ENCODE measurements at regions of chr1 and their contacts with region 1.

Region 1: DNA sequence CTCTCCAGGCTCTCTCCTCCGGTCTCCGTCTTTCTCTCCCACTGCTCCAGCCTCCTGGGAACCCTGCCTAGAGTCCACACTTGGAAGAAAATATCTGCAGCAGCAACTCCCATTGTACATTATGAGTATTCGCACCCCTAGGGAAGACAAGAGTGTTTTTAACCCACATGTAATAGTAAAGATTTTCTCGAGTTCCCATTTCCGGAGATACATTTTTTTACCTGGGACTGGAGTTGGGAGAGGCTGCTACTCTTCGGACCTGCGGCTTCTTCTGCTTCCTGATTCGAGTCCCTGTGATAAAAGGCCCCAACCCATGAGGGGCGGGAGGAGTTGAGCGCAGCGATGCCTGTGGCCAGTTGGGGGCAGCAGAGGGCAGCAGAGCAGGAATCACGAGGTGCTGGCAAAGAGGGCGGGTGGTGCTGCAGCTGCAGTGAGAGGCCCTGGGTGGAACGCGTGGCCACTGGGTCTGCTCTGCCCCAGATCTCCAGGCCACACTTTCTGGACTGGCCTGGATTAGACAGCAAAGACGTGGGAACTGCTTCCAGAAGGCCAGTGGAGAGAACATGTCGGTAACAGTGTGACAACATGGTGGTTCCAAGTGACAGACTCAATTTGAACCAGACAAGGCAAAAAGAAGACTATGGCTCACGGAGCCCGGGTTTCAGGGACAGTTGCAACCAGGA is 221.0 kb upstream of the CSF3R start:
- DNase-seq: peak; percentile 85
- H3K4me3 ChIP-seq: no peak overlapping the region
- H3K27ac ChIP-seq: no peak overlapping the region
- H3K4me1 ChIP-seq: peaks cover 10% of the 10 kb centered on the region
- CTCF ChIP-seq: peak; percentile 96

Region 2: GRCh38 chr1:36609241-36610027 is 94.2 kb before region 1 on chr1:
- CTCF ChIA-PET with region 1: no interaction called
- POLR2A ChIA-PET with region 1: no interaction called
- intact Hi-C with region 1: loop called (anchors 10 kb)
- DNase-seq: peak; percentile 76
- H3K4me3 ChIP-seq: no peak overlapping the region
- H3K27ac ChIP-seq: no peak overlapping the region
- H3K4me1 ChIP-seq: no peaks in the 10 kb centered on the region
- CTCF ChIP-seq: peak; percentile 98

Region 3: GRCh38 chr1:36737767-36738166 is 34.1 kb after region 1 on chr1:
- CTCF ChIA-PET with region 1: no interaction called
- POLR2A ChIA-PET with region 1: no interaction called
- intact Hi-C with region 1: no loop called
- DNase-seq: no peak
- H3K4me3 ChIP-seq: no peak overlapping the region
- H3K27ac ChIP-seq: no peak overlapping the region
- H3K4me1 ChIP-seq: no peaks in the 10 kb centered on the region
- CTCF ChIP-seq: no peak

Region 4: DNA sequence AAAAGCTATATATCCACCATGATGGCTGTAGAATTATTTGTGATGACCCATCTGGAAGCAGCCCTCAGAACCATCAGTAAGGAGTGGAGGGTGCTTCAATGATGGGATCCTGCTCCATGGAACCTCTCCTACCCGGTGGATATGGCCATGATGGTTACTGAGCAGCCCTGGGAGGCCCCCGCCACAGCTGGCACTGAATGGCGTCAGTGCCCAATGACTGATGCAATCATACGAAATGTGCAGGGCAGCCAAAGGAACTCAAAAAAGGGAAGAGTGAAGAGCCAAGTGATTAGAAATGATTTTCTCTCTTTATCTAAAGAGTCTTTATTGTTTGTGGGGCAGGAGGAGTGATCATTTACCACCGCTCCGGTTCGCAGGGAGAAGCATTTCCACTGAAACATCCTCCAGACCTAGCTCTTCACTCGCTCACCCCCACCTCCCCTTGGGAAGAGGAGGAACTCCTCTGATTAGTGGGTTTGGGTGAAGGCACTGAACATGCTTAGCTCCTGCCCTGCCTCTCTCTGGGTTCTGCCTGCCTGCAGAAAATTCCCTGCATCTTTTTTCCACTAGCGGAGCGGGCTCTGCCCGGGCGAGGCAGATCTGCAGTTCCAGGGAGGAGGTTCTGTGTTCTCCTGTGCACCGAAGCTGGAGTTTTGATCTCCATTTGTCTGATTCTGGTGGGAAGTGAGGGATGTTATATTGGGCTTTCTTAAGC is 70.3 kb after region 1 on chr1:
- CTCF ChIA-PET with region 1: no interaction called
- POLR2A ChIA-PET with region 1: no interaction called
- intact Hi-C with region 1: no loop called
- DNase-seq: no peak
- H3K4me3 ChIP-seq: no peak overlapping the region
- H3K27ac ChIP-seq: no peak overlapping the region
- H3K4me1 ChIP-seq: no peaks in the 10 kb centered on the region
- CTCF ChIP-seq: no peak

Region 5: GRCh38 chr1:36885538-36886357 is 182.1 kb after region 1 on chr1:
- CTCF ChIA-PET with region 1: no interaction called
- POLR2A ChIA-PET with region 1: no interaction called
- intact Hi-C with region 1: loop called (anchors 10 kb)
- DNase-seq: no peak
- H3K4me3 ChIP-seq: peak overlapping the region; percentile 37
- H3K27ac ChIP-seq: peak overlapping the region; percentile 92
- H3K4me1 ChIP-seq: peaks cover 75% of the 10 kb centered on the region
- CTCF ChIP-seq: peak; percentile 39; the same call in 1 of the 2 replicates

Region 6: GRCh38 chr1:36950604-36951291 is 247.1 kb after region 1 on chr1:
- CTCF ChIA-PET with region 1: no interaction called
- POLR2A ChIA-PET with region 1: no interaction called
- intact Hi-C with region 1: loop called (anchors 5 kb)
- DNase-seq: peak; percentile 97
- H3K4me3 ChIP-seq: peak overlapping the region; percentile 44
- H3K27ac ChIP-seq: peak overlapping the region; percentile 99
- H3K4me1 ChIP-seq: peaks cover 99% of the 10 kb centered on the region
- CTCF ChIP-seq: no peak

Region 7: DNA sequence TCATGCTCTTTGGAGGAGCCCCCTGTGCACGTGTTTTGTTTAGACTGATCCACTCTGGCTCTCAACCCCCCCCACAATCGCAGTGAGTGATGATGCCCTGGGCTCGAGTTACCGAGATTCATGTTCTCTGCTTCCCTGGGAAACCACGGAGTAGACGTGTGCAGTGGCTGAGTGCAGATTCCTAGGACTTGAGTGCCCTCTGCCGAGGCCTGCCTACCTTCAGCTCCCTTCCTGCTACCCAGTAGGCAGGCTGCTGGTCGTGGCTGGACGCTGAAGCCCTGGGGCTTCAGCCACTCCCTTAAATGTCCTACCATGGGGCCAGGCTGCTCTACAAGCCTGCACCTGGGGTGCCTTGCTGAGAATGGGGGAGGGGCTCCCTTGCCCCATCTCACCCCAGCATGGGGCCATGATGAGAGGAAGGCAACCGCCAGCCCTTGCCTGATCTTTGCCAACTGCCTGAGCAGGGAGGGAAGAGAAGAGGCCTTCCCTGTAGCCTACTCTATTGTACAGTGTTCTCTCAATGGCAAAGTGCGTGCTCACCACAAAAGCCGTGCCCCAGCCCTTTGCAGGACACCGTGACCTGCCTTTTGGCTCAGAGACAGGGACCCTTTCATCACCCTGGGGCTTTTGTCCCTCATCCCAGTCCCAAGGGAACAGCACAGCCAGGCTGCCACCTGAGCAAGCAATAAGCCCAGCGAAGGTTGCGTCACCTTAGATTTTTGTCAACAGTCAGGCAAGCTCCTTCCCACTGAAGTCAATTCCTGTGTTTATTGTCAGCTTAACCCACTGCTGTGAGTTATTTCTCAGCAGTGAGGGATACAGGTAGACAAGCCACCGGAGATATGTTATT is 334.8 kb after region 1 on chr1:
- CTCF ChIA-PET with region 1: no interaction called
- POLR2A ChIA-PET with region 1: no interaction called
- intact Hi-C with region 1: loop called (anchors 1 kb)
- DNase-seq: peak; percentile 75
- H3K4me3 ChIP-seq: no peak overlapping the region
- H3K27ac ChIP-seq: no peak overlapping the region
- H3K4me1 ChIP-seq: peaks cover 55% of the 10 kb centered on the region
- CTCF ChIP-seq: peak; percentile 75

Region 8: DNA sequence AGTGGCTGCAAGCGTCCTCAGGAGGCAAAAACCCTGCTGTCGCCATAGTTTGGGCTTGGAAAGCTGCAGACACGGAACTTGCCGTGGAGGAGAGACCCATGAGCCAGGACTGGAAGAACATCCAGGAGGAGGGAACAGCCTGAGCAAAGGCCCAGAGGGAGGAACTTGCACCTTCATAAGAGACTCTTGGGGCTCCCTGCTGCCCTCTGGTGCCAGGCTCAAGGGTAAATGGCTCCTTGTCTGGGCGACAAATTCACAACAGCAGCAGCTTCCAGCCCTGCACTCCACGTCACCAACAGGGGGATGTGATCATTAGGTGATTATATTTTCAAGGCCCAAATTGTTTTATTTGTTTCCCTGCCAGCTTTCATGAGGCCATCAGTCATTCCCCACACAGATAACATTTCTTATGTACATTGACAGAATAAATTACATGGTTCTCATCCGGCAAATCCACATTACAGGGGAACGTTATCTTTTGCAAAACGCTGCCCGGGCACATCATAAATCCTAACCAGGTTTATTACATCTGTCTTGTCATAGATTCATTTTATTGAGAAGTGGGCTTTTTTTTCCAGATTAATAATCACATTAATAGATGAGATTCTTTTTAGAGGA is 473.7 kb after region 1 on chr1:
- CTCF ChIA-PET with region 1: no interaction called
- POLR2A ChIA-PET with region 1: no interaction called
- intact Hi-C with region 1: loop called (anchors 2 kb)
- DNase-seq: peak; percentile 50
- H3K4me3 ChIP-seq: no peak overlapping the region
- H3K27ac ChIP-seq: no peak overlapping the region
- H3K4me1 ChIP-seq: no peaks in the 10 kb centered on the region
- CTCF ChIP-seq: peak; percentile 77

Region 9: DNA sequence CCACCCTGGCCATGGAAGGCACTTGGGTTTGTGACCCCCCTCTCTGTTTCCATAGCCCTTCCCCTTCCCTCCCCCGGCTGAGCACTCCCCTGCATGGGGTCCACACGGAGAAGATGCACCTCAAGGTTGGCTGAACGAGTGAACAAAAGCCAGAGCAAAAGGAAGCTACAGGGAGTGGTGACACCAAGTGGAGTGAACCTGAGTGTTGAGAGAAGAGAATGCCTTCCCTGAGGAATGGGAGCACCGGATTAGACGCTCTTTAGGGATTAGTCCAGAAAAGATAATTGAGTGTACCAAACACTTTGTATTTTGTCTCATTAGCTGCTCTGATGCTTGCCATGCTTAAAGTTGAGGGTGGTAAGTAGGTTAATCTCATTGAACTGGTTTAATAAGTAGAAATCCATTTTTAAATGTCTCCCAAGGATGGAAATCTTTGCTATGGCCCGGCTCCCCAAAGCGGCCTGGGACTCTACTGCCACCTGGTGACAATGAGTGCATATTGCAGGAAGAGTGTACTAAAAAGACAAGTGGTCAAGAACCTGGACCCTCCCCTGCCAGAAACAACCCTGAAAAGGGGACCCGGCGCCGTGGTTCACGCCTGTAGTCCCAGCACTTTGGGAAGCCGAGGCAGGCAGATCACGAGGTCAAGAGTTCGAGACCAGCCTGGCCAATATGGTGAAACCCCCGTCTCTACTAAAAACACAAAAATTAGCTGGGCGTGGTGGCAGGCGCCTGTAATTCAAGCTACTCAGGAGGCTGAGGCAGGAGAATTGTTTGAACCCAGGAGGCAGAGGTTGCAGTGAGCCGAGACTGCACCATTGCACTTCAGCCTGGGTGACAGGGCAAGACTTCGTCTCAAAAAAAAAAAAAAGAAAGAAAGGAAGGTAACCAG is 620.1 kb after region 1 on chr1:
- CTCF ChIA-PET with region 1: no interaction called
- POLR2A ChIA-PET with region 1: no interaction called
- intact Hi-C with region 1: loop called (anchors 1 kb)
- DNase-seq: peak; percentile 54
- H3K4me3 ChIP-seq: no peak overlapping the region
- H3K27ac ChIP-seq: no peak overlapping the region
- H3K4me1 ChIP-seq: no peaks in the 10 kb centered on the region
- CTCF ChIP-seq: peak; percentile 91

Measured in OCI-LY7 (cell line).